Caco-2 (cell line): ENCODE measurements at regions of chr2 and their contacts with region 1.

Region 1: GRCh38 chr2:154686179-154686578 is 12.3 kb upstream of the KCNJ3 start:
- DNase-seq: no peak
- H3K4me3 ChIP-seq: no peak overlapping the region
- H3K4me3 Mint-ChIP-seq: no peak overlapping the region
- H3K27ac Mint-ChIP-seq: no peak overlapping the region
- H3K4me1 ChIP-seq: no peaks in the 10 kb centered on the region
- H3K4me1 Mint-ChIP-seq: no peaks in the 10 kb centered on the region
- H3K27me3 ChIP-seq: no peaks in the 10 kb centered on the region; the same call in 1 of the 2 replicates
- H3K27me3 Mint-ChIP-seq: peaks cover 14% of the 10 kb centered on the region
- CTCF ChIP-seq: no peak

Region 2: GRCh38 chr2:154439156-154439555 is 247.0 kb before region 1 on chr2:
- CTCF ChIA-PET with region 1: no interaction called
- POLR2A ChIA-PET with region 1: no interaction called
- intact Hi-C with region 1: loop called (anchors 2 kb)
- DNase-seq: no peak
- H3K4me3 ChIP-seq: no peak overlapping the region
- H3K4me3 Mint-ChIP-seq: no peak overlapping the region
- H3K27ac Mint-ChIP-seq: no peak overlapping the region
- H3K4me1 ChIP-seq: no peaks in the 10 kb centered on the region; the same call in 1 of the 2 replicates
- H3K4me1 Mint-ChIP-seq: no peaks in the 10 kb centered on the region
- H3K27me3 ChIP-seq: no peaks in the 10 kb centered on the region
- H3K27me3 Mint-ChIP-seq: no peaks in the 10 kb centered on the region
- CTCF ChIP-seq: peak in 1 of 2 experiments; percentile 30